GM12878 (cell line): ENCODE measurements at regions of chr9 and their contacts with region 1.

Region 1: GRCh38 chr9:137223078-137223970 is 1.3 kb upstream of the RNF208 start:
- DNase-seq: peak; percentile 93
- ATAC-seq: peak; percentile 87
- H3K4me3 ChIP-seq: peak overlapping the region; percentile 93
- H3K27ac ChIP-seq: peak overlapping the region; percentile 73
- H3K4me1 ChIP-seq: peaks cover 16% of the 10 kb centered on the region
- H3K27me3 ChIP-seq: no peaks in the 10 kb centered on the region
- CTCF ChIP-seq: no peak
- EP300 ChIP-seq: no peak
- POLR2A ChIP-seq: peak; percentile 79
- RAD21 ChIP-seq: no peak

Region 2: DNA sequence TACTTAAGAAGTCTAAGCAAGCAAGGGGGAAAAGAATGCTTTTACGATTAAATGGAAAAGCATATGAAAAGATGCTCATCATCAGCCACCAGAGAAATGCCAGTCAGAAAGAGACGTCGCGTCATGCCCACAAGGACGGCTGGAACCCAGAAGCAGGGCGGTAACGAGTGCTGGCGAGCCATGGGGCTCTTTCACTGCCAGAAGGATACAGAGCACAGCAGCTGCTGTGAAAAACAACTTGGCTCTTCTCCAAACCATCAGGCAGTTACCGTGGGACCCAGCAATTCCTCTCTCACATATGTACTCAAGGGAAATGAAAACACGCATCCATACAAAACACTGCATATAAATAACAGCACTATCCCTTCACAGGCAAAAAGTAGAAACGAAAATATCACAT is 1411.5 kb before region 1 on chr9:
- CTCF ChIA-PET with region 1: no interaction called
- POLR2A ChIA-PET with region 1: no interaction called
- RAD21 ChIA-PET with region 1: no interaction called
- SMC1A ChIA-PET with region 1: no interaction called
- in situ Hi-C with region 1: no loop called
- intact Hi-C with region 1: no loop called
- DNase-seq: no peak
- ATAC-seq: no peak
- H3K4me3 ChIP-seq: no peak overlapping the region
- H3K27ac ChIP-seq: no peak overlapping the region
- H3K4me1 ChIP-seq: no peaks in the 10 kb centered on the region
- H3K27me3 ChIP-seq: no peaks in the 10 kb centered on the region
- CTCF ChIP-seq: no peak
- EP300 ChIP-seq: no peak
- POLR2A ChIP-seq: no peak
- RAD21 ChIP-seq: no peak

Region 3: DNA sequence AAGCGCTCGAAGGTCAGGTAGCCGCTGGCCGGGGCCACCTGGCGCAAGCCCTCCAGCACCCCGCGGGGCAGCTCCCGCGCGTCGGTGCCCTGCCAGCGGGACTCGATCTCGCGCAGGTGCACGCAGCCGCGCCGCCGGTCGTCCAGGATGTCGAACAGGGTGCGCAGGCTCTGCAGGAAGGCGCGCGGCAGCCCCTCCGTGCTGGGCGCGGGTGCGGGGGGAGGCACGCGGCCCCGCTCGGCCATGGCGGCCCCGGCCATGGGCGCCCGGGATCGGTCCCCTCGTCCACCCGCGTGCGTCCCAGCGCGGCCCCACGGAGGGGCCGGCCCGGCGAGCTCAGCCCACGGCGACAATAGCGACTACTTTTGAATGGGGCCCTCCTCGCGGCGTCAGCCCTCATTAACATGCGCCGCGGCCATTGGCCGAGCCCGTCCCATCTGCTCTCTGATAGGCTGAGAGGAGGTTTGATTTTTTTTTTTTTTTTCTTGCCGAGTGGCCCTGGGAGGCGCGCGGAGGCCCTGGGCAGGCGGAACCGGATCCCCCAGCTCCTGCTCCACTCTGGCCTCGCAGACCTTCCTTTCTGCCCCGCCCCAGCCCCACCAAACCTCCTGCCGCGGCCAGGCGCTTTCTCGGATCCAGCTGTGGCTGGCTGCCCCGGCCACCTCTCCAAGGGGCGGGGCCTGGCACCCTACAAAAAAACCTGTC is 153.0 kb before region 1 on chr9 and contains the start of gene SAPCD2:
- CTCF ChIA-PET with region 1: interaction called, 13 read pairs
- POLR2A ChIA-PET with region 1: interaction called, 4 read pairs
- RAD21 ChIA-PET with region 1: interaction called, 5 read pairs
- SMC1A ChIA-PET with region 1: no interaction called
- in situ Hi-C with region 1: no loop called
- intact Hi-C with region 1: no loop called
- DNase-seq: no peak
- ATAC-seq: peak; percentile 88
- H3K4me3 ChIP-seq: peak within 1 kb of the TSS; percentile 80
- H3K27ac ChIP-seq: peak within 1 kb of the TSS; percentile 70
- H3K4me1 ChIP-seq: peaks cover 33% of the 10 kb centered on the region
- H3K27me3 ChIP-seq: no peaks in the 10 kb centered on the region
- CTCF ChIP-seq: no peak
- EP300 ChIP-seq: no peak
- POLR2A ChIP-seq: peak; percentile 69
- RAD21 ChIP-seq: no peak
- polyA plus RNA-seq, gene SAPCD2: 1.6 to 2.0 TPM

Region 4: DNA sequence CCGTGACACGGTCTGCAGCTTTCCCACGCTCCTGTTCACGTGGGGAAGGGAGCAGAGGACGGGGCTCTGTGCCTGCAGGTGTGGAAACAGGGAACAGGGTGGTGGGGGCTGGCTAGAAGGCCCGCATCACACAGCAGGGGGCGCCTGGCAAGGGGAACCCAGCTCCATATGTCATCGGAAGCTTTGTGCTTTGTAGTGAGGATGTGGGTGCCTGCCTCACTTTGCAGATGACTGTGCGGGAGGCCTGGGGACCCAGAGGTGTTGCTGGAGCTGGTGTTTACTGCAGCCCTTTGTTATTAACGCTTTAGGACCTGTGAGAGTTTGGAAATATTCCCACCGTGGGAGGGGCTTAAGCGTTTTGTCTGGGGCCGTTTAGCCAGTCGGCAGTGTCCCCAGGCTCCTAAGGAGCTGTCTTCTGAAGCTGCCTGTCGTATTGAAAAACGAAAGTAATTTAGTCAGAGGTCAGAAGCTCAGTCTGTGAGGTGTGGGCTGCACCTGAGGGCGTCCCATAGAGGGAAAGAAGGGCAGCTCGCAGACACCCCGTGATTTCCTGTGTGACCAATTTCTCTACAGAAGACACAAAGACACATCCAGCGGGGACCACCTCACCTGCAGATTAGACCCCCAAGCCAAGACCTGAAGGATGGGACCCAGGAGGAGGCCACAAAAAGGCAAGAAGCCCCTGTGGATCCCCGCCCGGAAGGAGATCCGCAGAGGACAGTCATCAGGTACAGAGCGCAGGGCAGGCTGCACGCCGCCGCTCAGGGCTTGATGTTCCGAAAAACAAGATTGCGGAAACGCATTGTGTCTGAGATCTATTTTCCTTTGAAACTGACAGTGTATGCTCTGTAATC is 127.4 kb before region 1 on chr9:
- CTCF ChIA-PET with region 1: interaction called, 13 read pairs
- POLR2A ChIA-PET with region 1: interaction called, 7 read pairs
- RAD21 ChIA-PET with region 1: interaction called, 10 read pairs
- SMC1A ChIA-PET with region 1: interaction called, 3 read pairs
- in situ Hi-C with region 1: no loop called
- intact Hi-C with region 1: no loop called
- DNase-seq: peak; percentile 61
- ATAC-seq: peak; percentile 99
- H3K4me3 ChIP-seq: peak overlapping the region; percentile 49; the same call in 1 of the 2 replicates
- H3K27ac ChIP-seq: peak overlapping the region; percentile 61
- H3K4me1 ChIP-seq: peaks cover 11% of the 10 kb centered on the region
- H3K27me3 ChIP-seq: no peaks in the 10 kb centered on the region
- CTCF ChIP-seq: peak; percentile 63 to 84 (median 67)
- EP300 ChIP-seq: peak in 1 of 2 experiments; percentile 52; a peak in 2 of 4 replicates
- POLR2A ChIP-seq: peak; percentile 48; the same call in 1 of the 2 replicates
- RAD21 ChIP-seq: no peak

Region 5: DNA sequence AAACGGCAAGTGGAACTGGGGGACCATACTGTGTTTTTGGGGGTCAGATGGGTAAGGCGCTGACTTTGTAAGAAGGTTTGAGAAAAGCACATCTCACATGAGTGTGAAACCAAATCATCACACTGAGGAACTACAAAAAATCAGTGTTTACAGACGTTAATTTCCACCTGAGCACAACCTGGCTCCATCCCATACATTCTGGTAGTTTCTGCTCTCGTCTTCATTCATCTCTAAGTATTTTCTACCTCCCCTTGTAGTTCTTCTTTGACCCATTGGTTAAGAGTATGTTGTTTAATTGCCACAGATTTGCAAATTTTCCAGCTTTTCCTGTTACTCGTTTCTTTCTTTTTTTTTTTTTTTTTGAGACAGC is 99.9 kb before region 1 on chr9:
- CTCF ChIA-PET with region 1: interaction called, 22 read pairs
- POLR2A ChIA-PET with region 1: interaction called, 18 read pairs
- RAD21 ChIA-PET with region 1: interaction called, 12 read pairs
- SMC1A ChIA-PET with region 1: interaction called, 11 read pairs
- in situ Hi-C with region 1: loop called (anchors 5 kb)
- intact Hi-C with region 1: loop called (anchors 1 kb)
- DNase-seq: peak; percentile 91
- ATAC-seq: peak; percentile 30
- H3K4me3 ChIP-seq: 0 out of 2 replicates have a peak overlapping the region, but pooled peaks have one; percentile 3
- H3K27ac ChIP-seq: peak overlapping the region; percentile 47
- H3K4me1 ChIP-seq: peaks cover 42% of the 10 kb centered on the region
- H3K27me3 ChIP-seq: no peaks in the 10 kb centered on the region
- CTCF ChIP-seq: no peak
- EP300 ChIP-seq: no peak
- POLR2A ChIP-seq: no peak
- RAD21 ChIP-seq: no peak

Region 6: GRCh38 chr9:137150617-137151457 is 72.5 kb before region 1 on chr9:
- CTCF ChIA-PET with region 1: interaction called, 10 read pairs
- POLR2A ChIA-PET with region 1: interaction called, 33 read pairs
- RAD21 ChIA-PET with region 1: interaction called, 34 read pairs
- SMC1A ChIA-PET with region 1: interaction called, 6 read pairs
- in situ Hi-C with region 1: no loop called
- intact Hi-C with region 1: no loop called
- DNase-seq: no peak
- ATAC-seq: peak; percentile 74
- H3K4me3 ChIP-seq: 0 out of 2 replicates have a peak overlapping the region, but pooled peaks have one; percentile 12
- H3K27ac ChIP-seq: peak overlapping the region; percentile 44
- H3K4me1 ChIP-seq: peaks cover 9% of the 10 kb centered on the region; the same call in 1 of the 2 replicates
- H3K27me3 ChIP-seq: no peaks in the 10 kb centered on the region
- CTCF ChIP-seq: no peak
- EP300 ChIP-seq: no peak
- POLR2A ChIP-seq: no peak
- RAD21 ChIP-seq: no peak

Region 7: GRCh38 chr9:137188490-137189296 is 34.6 kb before region 1 on chr9 and contains the starts of genes ANAPC2 and SSNA1:
- CTCF ChIA-PET with region 1: interaction called, 21 read pairs
- POLR2A ChIA-PET with region 1: interaction called, 22 read pairs
- RAD21 ChIA-PET with region 1: interaction called, 23 read pairs
- SMC1A ChIA-PET with region 1: no interaction called
- in situ Hi-C with region 1: no loop called
- intact Hi-C with region 1: loop called (anchors 5 kb)
- DNase-seq: peak; percentile 82
- ATAC-seq: peak; percentile 92
- H3K4me3 ChIP-seq: peak within 1 kb of the TSS; percentile 99
- H3K27ac ChIP-seq: peak within 1 kb of the TSS; percentile 77
- H3K4me1 ChIP-seq: peaks cover 22% of the 10 kb centered on the region
- H3K27me3 ChIP-seq: no peaks in the 10 kb centered on the region
- CTCF ChIP-seq: peak; percentile 41 to 58 (median 52)
- EP300 ChIP-seq: peak; percentile 14 to 49; a peak in 1 of 4 replicates
- POLR2A ChIP-seq: peak; percentile 95
- RAD21 ChIP-seq: peak; percentile 45
- polyA plus RNA-seq, gene ANAPC2: 0.03 to 0.04 TPM
- polyA plus RNA-seq, gene SSNA1: 0.63 to 13.4 TPM

Region 8: DNA sequence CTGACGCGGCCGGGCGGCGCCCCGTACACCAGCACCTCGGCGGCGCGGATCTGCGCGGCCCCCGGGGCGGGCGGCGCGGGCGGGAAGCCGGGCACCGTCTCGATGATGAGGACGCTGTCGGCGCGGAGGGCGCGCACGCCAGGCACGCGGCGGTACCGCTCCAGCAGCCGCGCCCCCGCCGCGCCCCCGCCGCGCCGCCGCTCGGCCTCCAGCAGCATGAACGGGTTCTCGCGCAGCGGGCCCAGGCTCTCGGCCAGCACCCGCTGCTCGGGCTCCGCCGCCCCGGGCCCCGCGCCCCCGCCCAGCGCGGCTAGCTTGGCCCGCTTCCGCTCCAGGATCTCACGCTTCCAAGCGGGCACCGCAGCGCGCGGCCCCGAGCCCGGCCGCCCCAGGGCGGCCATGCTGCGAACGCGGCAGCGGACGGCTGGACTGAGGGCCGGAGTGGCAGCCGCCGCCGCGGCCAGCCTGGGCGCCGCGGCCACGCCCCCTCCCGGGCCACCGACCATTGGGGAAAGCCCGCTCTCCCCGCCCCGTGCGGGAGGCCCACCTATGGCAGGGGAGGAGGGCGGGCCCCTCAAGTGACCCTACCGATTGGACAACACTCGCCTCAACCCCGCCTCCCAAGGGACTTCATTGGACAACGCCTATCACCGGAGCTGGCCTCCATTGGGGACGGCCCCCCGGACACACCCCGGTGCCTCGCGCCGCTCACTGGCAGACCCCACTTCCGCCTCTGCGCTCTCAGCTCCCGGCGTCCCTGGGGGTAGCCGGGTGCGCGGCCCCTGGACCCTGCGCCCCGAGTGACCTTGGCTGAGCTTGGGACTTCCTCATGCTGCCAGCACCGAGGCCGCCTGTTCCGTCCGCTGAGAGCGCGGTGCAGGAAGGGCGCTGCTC is 22.8 kb before region 1 on chr9 and contains the start of gene TPRN:
- CTCF ChIA-PET with region 1: interaction called, 10 read pairs
- POLR2A ChIA-PET with region 1: interaction called, 68 read pairs
- RAD21 ChIA-PET with region 1: interaction called, 9 read pairs
- SMC1A ChIA-PET with region 1: interaction called, 18 read pairs
- in situ Hi-C with region 1: no loop called
- intact Hi-C with region 1: loop called (anchors 2 kb)
- DNase-seq: peak; percentile 95
- ATAC-seq: peak; percentile 96
- H3K4me3 ChIP-seq: peak within 1 kb of the TSS; percentile 77
- H3K27ac ChIP-seq: peak within 1 kb of the TSS; percentile 62
- H3K4me1 ChIP-seq: peaks cover 32% of the 10 kb centered on the region
- H3K27me3 ChIP-seq: no peaks in the 10 kb centered on the region
- CTCF ChIP-seq: no peak
- EP300 ChIP-seq: no peak
- POLR2A ChIP-seq: peak; percentile 95
- RAD21 ChIP-seq: no peak
- polyA plus RNA-seq, gene TPRN: 0.18 to 0.75 TPM